Natural killer cell (primary cell): ENCODE measurements at regions of chr5 and their contacts with region 1.

Region 1: DNA sequence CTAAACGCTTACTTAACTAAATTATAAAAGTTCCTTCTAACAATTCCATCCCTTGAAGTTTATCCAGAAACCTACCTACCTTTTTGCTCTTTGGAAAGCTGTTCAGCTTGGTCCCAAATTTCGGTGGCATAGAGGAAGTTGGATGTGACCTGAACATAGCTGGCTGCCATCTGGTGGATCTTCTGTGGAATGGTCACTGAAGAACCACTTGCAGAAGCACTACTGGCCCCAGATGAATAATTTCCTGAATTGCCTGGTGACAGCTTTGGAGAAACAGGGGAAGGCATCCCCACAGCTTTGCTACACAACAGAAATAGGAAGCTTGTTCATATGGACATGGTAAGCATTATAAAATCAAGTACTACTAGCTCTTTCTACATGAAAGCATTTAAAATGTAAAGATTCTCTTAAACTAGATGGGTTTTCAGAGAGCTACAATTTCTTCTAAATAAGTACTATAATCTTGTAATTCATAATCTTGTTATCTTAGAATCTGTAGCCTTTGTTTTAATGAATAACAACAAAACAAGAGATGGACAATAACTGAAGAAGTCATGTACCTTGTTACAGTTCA is 9.9 kb downstream of the LEAP2 start:
- DNase-seq: peak in 1 of 2 donors; percentile 68
- ATAC-seq: peak; percentile 73 to 74 (median 73)
- H3K4me3 ChIP-seq: no peak overlapping the region
- H3K4me3 Mint-ChIP-seq: no peak overlapping the region
- H3K27ac ChIP-seq: no peak overlapping the region
- H3K27ac Mint-ChIP-seq: peak overlapping the region; percentile 43 to 70
- H3K4me1 ChIP-seq: no peaks in the 10 kb centered on the region
- H3K4me1 Mint-ChIP-seq: peaks cover 0 to 5% of the 10 kb centered on the region in 2 donors
- H3K27me3 ChIP-seq: no peaks in the 10 kb centered on the region
- H3K27me3 Mint-ChIP-seq: no peaks in the 10 kb centered on the region
- CTCF ChIP-seq: peak; percentile 44

Region 2: DNA sequence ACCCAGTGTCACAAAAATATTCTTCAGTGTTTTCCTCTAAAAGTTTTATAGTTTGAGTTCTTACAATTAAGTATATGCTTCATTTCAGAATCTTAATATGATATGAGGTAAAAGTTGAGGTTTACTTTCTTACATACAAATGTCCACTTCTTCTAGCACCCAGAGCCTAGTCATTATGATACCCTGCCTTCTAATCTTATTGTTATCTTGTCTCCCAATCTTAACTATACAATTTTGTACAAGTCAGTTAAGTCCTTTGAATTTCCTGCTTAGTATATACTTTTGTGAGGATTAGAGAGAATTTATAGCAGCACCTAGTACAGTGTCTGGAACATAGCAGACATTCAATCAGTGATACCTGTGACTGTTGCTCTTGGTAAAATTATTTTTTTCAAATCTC is 297.3 kb before region 1 on chr5:
- intact Hi-C with region 1: no loop called
- DNase-seq: no peak
- ATAC-seq: no peak
- H3K4me3 ChIP-seq: no peak overlapping the region
- H3K4me3 Mint-ChIP-seq: no peak overlapping the region
- H3K27ac ChIP-seq: no peak overlapping the region
- H3K27ac Mint-ChIP-seq: no peak overlapping the region
- H3K4me1 ChIP-seq: no peaks in the 10 kb centered on the region
- H3K4me1 Mint-ChIP-seq: no peaks in the 10 kb centered on the region
- H3K27me3 ChIP-seq: no peaks in the 10 kb centered on the region
- H3K27me3 Mint-ChIP-seq: no peaks in the 10 kb centered on the region
- CTCF ChIP-seq: no peak

Region 3: DNA sequence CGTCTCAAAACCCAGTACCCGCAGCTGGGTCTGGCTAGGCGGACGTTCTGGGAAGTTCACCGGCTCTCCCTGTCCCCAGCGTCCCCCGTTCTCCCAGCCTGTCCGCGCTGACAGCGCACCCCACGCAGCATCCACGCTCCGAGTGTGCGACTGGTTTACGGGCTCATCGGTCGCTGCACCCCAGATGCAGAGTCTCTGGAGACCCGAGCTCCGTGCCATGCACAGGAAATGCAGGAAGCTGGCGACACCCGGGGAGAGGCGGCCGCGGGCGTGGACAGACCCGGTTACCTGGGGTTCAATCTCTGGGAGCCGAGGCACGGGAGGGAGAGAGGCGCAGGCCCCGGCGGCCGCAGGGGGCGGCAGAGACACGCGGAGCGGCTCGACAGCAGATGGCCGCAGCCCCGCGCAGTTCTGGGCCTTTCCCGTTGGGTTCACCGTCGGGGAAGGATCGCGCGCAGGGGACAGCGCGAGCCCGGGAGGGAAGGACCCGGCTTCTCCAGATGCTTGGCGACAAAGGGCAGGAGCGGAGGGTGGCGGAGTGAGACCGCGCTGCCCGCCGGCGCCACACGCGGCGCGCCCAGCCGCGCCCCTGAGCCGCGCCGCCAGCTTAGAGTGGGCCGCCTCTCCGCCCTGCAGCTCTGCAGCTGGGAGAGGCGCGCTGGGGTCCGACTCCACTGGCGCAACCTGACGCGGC is 53.5 kb before region 1 on chr5:
- intact Hi-C with region 1: loop called (anchors 1 kb)
- DNase-seq: peak; percentile 65 to 85
- ATAC-seq: peak; percentile 87 to 93 (median 92)
- H3K4me3 ChIP-seq: peak overlapping the region; percentile 30
- H3K4me3 Mint-ChIP-seq: peak overlapping the region; percentile 92
- H3K27ac ChIP-seq: no peak overlapping the region
- H3K27ac Mint-ChIP-seq: peak overlapping the region in 1 of 2 donors; percentile 85
- H3K4me1 ChIP-seq: peaks cover 18% of the 10 kb centered on the region
- H3K4me1 Mint-ChIP-seq: peaks cover 6 to 19% of the 10 kb centered on the region in 2 donors
- H3K27me3 ChIP-seq: peaks cover 21% of the 10 kb centered on the region
- H3K27me3 Mint-ChIP-seq: peaks cover 36 to 46% of the 10 kb centered on the region in 2 donors
- CTCF ChIP-seq: peak; percentile 81